ENCODE measurements at regions of chr19 and their contacts with region 1.

Region 1: DNA sequence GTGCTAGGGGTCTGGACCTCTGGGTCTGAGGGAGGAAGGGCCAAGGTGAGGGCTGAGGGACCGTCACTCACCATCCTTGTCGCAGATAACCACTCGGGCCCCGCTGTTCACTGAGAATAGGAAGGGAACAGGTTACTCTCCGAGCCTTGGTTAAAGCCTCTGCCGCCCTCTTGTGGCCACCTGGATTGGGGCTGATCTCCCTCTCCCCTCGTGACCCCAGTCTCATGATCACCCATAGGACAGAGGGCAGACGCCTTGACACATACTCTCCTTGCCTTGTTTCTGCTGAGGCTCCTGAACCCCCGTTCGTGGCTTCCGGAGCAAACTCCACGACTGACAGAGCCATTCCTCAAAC is 580 bp downstream of the HSD17B14 start:
- DNase-seq: peak; percentile 83 to 92
- H3K4me3 ChIP-seq: peak overlapping the region; percentile 67
- H3K27ac ChIP-seq: peak overlapping the region; percentile 28
- H3K4me1 ChIP-seq: no peaks in the 10 kb centered on the region
- H3K27me3 ChIP-seq: no peaks in the 10 kb centered on the region
- CTCF ChIP-seq: peak; percentile 93

Region 2: GRCh38 chr19:48674921-48675824 is 160.5 kb before region 1 on chr19:
- CTCF ChIA-PET with region 1: no interaction called
- POLR2A ChIA-PET with region 1: no interaction called
- intact Hi-C with region 1: loop called (anchors 1 kb)
- DNase-seq: peak; percentile 71 to 72
- H3K4me3 ChIP-seq: no peak overlapping the region
- H3K27ac ChIP-seq: no peak overlapping the region
- H3K4me1 ChIP-seq: peaks cover 32% of the 10 kb centered on the region
- H3K27me3 ChIP-seq: no peaks in the 10 kb centered on the region
- CTCF ChIP-seq: peak; percentile 92

Region 3: DNA sequence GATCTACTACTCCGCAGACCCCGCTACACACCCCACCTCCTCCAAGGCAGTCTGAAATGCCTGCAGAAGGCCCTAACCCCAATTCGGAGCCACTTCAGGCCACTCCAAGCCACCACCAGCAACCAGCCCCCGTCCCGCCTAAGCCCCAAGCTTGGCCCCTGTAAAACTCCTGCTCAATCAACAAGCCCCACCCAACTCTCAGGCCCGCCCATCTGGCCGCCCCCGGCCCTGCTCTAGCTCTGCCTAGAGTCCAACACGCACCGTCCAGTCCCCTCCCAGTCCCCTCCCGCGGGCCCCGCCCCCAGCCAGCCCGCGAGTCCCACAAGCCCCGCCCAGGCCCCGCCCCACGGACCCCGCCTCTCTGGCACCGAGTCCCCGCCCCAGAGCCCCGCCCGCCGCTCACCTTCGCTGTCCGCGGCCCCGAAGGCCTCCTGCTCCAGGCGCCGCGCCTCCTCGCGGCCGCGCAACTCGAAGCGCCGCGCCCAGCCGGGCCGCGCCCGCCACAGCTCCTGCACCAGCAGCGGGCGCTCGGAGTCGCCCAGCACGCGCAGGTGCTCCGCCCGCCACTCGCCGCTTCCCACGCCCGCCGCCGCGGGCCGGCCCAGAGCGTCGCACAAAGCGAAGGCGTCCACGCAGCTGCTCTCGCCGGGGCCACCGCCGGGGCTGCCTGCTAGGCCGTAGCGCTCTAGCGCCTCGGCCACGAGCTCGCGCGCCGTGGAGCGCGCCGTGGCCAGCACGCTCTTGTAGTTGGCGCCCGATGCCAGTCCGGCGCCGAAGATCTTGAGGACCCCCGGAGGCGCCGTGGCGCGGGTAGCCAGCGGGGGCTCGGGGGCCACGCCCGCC is 96.9 kb before region 1 on chr19:
- CTCF ChIA-PET with region 1: interaction called, 15 read pairs
- POLR2A ChIA-PET with region 1: no interaction called
- intact Hi-C with region 1: no loop called
- DNase-seq: peak; percentile 74 to 96
- H3K4me3 ChIP-seq: peak overlapping the region; percentile 58; the same call in 1 of the 2 replicates
- H3K27ac ChIP-seq: no peak overlapping the region
- H3K4me1 ChIP-seq: no peaks in the 10 kb centered on the region; the same call in 1 of the 2 replicates
- H3K27me3 ChIP-seq: no peaks in the 10 kb centered on the region
- CTCF ChIP-seq: no peak

Region 4: DNA sequence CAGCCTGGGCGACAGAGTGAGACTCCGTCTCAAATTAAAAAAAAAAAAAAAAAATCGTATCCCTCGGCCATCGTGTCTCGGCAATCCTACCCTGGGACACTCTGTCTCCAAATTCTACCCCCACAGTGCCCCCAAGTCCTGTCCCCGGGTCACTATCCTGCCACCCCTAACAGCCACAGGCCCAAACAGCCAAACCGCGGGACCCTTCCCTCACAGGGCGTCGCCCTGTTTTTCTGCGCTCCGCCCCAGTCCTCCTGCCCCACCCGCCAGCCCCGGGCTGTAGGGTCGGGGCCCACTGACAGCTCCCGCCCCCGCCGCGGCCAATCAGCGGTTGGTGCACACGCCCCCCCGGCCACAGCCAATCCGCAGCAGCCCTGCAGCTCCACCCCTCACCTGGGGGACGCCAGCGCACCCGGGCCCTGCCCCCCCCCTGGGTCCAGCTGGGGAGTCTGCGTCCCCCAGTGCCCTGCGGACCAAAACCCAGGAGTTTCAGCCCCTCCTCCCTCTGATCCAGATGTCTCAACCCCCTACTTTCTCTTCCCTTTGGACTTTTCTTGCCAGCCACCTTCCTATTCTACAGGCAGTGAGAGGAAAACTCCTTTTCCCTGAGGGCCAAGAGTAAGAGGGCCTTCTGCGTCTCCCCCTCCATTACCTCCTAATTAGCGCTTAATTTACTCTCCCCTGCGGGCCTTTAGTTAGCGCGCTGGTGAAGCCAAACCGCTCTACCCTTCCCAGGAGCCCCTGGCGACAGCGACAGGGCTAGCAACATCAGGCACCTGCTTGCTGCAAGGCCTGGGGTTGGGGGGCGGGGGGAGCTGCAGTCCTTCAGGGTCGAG is 23.4 kb before region 1 on chr19:
- CTCF ChIA-PET with region 1: interaction called, 10 read pairs
- POLR2A ChIA-PET with region 1: interaction called, 10 read pairs
- intact Hi-C with region 1: loop called (anchors 2 kb)
- DNase-seq: peak; percentile 70 to 87
- H3K4me3 ChIP-seq: peak overlapping the region; percentile 88
- H3K27ac ChIP-seq: no peak overlapping the region
- H3K4me1 ChIP-seq: 0 out of 2 replicates have a peak, but pooled peaks cover 14% of the 10 kb centered on the region
- H3K27me3 ChIP-seq: no peaks in the 10 kb centered on the region
- CTCF ChIP-seq: no peak

Region 5: GRCh38 chr19:48965040-48965805 is 129.5 kb after region 1 on chr19 and contains the start of gene FTL:
- CTCF ChIA-PET with region 1: interaction called, 3 read pairs
- POLR2A ChIA-PET with region 1: interaction called, 5 read pairs
- intact Hi-C with region 1: loop called (anchors 2 kb)
- DNase-seq: peak; percentile 92 to 99
- H3K4me3 ChIP-seq: peak within 1 kb of the TSS; percentile 84
- H3K27ac ChIP-seq: peak within 1 kb of the TSS; percentile 95
- H3K4me1 ChIP-seq: peaks cover 39% of the 10 kb centered on the region
- H3K27me3 ChIP-seq: no peaks in the 10 kb centered on the region
- CTCF ChIP-seq: no peak
- total RNA-seq, gene FTL: 3,402 and 3,822 TPM in 2 replicates